Astrocyte of the cerebellum (primary cell): ENCODE measurements at regions of chr11 and their contacts with region 1.

Region 1: DNA sequence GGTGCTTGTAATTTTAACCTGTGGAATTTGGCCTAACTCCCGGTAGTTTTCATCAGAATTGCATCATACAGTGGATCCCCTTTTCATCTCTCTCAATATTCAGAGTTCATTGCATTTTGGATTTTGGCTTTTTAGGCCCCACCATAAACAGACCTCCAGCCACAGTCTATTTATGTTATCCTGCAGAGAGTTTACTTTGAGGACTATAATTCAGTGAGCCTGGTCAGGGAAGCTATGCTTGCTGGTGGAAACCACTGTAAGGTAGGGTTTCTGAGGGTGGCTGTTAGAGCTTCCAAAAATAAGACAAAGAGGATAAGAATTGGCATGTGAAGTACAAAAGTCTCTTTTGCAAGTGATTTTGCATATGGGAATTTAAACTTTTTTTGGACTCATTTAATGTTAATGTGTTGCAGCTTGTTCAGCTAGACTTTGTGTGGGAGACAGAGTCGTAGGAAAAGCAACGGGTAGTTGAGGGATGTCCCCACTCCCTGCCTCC is 34.8 kb upstream of the DDI1 start:
- DNase-seq: peak; percentile 53
- H3K4me3 ChIP-seq: no peak overlapping the region
- CTCF ChIP-seq: no peak

Region 2: DNA sequence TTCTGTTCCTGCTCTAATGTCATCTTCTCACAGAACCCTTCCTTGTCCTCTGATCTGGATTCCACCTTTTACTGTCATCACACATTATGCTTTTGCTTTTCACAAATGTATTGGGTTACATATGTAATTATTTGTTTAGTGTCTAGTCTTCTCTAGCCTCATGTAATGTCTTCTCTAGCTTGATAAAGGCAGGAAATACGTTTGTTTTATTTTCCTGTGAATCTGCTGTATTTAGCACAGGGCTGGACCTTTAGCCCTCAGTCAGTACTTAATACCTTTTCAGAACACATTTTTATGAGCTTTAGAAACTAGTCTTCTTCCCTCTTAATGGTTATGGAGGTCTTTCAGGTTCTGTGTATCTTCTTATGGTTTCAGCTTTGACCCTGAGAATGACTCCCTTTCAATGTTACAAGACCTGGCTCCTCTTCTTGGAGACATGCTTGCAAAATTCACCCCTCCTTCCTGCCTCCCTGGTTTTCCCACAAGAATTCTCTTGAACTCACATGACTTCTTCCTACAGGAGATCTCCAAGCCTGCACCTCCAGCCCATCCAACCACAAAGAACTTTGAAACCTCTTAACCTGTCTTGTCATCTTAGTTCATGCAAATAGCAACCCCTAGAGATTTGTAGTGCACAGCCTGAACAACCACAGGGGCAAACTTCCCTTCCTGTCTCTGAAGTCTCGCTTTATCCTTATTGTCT is 97.8 kb before region 1 on chr11:
- in situ Hi-C with region 1: no loop called
- DNase-seq: no peak
- H3K4me3 ChIP-seq: no peak overlapping the region
- CTCF ChIP-seq: no peak

Region 3: GRCh38 chr11:103927535-103927934 is 74.1 kb before region 1 on chr11:
- in situ Hi-C with region 1: no loop called
- DNase-seq: no peak
- H3K4me3 ChIP-seq: no peak overlapping the region
- CTCF ChIP-seq: peak; percentile 51

Region 4: GRCh38 chr11:103953797-103954486 is 47.7 kb before region 1 on chr11:
- in situ Hi-C with region 1: loop called (anchors 5 kb)
- DNase-seq: no peak
- H3K4me3 ChIP-seq: no peak overlapping the region
- CTCF ChIP-seq: no peak

Region 5: DNA sequence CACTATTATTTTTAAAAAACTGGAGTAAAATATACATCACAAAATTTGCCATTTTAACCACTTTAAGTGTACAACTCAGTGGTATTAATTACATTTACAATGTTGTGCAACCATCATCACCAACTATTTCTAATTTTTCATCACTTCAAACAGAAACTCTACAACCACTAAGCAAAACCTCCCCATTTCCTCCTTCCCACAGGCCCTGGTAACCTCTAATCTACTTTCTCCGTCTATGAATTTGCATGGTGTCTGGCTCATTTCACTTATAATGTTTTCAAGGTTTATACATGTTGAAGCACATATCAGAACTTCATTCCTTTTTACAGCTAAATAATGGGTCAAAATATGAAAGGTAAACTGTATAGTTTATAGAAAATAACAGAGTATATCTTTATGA is 59.2 kb after region 1 on chr11:
- in situ Hi-C with region 1: no loop called
- DNase-seq: no peak
- H3K4me3 ChIP-seq: no peak overlapping the region
- CTCF ChIP-seq: no peak

Region 6: GRCh38 chr11:104106136-104106754 is 104.6 kb after region 1 on chr11:
- in situ Hi-C with region 1: no loop called
- DNase-seq: peak; percentile 48
- H3K4me3 ChIP-seq: no peak overlapping the region
- CTCF ChIP-seq: no peak